GM12878 (cell line): ENCODE measurements at regions of chr17 and their contacts with region 1.

Region 1: DNA sequence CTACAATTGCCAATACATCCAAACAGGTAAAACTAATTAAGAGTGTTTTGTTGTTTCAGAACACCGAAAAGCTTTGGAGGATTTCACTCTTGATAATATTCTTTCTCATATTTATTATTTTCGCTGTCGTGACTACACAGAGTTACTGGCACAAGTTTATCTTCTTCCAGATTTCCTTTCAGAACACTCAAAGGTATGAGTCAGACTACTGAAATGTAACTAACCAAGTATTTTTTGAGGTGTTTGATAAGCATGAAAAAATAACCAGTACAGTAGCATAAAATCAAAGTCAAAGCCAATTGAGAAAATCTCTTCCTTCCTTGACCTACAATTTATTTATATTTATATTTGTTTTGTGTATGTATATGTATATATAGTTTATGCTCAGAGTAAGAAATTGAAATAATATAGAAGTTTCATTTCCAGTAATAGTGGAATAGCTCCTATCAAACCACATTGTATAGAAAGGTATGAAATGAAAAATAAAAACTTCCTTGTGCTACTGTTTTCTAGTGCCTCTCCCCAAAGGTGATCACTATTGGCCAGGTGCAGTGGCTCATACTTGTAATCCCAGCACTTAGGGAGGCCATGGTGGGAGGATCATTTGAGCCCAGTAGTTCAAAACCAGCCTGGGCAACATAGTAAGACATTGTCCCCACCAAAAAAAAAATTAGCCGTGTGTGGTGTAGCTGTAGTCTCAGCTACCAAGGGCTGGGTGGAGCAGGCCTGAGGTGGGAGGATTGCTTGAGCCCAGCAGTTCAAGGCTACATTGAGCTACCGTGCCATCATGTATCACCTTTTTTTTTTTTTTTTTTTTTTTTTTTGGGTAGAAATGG is 11.0 kb downstream of the RAD51C start:
- DNase-seq: no peak
- ATAC-seq: 0 out of 3 replicates have a peak, but pooled peaks have one; percentile 3
- H3K4me3 ChIP-seq: no peak overlapping the region
- H3K27ac ChIP-seq: peak overlapping the region; percentile 78; the same call in 1 of the 2 replicates
- H3K4me1 ChIP-seq: peaks cover 41% of the 10 kb centered on the region
- H3K27me3 ChIP-seq: no peaks in the 10 kb centered on the region
- CTCF ChIP-seq: no peak
- EP300 ChIP-seq: no peak
- POLR2A ChIP-seq: no peak
- RAD21 ChIP-seq: no peak

Region 2: DNA sequence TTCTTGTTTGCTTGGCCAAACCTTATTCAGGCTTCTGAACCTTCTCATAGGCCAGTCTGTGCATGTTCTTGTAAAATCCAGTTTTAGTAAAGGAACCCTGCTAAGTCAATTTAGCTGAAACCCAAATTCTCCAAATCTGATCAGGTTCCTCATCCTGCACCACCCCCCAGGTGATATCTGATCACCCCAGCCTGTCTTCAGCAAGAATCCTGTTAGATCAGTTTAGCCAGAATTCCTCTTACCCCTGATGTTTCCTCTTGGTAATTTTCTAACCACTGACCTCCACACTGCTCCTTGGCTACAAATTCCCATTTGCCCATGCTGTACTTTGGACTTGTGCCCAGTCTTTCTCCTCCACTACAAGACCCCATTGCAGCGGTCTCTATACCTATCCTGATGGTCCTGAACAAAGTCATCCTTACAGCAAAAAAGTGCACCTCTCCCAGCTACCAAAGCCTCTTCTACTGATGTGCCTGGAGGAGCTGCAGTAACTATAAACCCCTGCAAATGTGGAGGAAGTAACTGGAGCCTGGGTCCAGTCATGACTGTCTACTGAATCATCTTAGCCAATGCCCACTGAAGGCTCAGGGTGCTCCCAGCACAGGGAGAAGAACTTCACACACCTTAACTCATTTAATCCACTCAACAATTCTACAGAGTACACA is 35.3 kb before region 1 on chr17:
- CTCF ChIA-PET with region 1: interaction called, 5 read pairs
- POLR2A ChIA-PET with region 1: interaction called, 4 read pairs
- RAD21 ChIA-PET with region 1: no interaction called
- SMC1A ChIA-PET with region 1: interaction called, 5 read pairs
- in situ Hi-C with region 1: no loop called
- intact Hi-C with region 1: loop called (anchors 5 kb)
- DNase-seq: no peak
- ATAC-seq: no peak
- H3K4me3 ChIP-seq: no peak overlapping the region
- H3K27ac ChIP-seq: no peak overlapping the region
- H3K4me1 ChIP-seq: no peaks in the 10 kb centered on the region
- H3K27me3 ChIP-seq: no peaks in the 10 kb centered on the region
- CTCF ChIP-seq: no peak
- EP300 ChIP-seq: no peak
- POLR2A ChIP-seq: no peak
- RAD21 ChIP-seq: no peak

Region 3: DNA sequence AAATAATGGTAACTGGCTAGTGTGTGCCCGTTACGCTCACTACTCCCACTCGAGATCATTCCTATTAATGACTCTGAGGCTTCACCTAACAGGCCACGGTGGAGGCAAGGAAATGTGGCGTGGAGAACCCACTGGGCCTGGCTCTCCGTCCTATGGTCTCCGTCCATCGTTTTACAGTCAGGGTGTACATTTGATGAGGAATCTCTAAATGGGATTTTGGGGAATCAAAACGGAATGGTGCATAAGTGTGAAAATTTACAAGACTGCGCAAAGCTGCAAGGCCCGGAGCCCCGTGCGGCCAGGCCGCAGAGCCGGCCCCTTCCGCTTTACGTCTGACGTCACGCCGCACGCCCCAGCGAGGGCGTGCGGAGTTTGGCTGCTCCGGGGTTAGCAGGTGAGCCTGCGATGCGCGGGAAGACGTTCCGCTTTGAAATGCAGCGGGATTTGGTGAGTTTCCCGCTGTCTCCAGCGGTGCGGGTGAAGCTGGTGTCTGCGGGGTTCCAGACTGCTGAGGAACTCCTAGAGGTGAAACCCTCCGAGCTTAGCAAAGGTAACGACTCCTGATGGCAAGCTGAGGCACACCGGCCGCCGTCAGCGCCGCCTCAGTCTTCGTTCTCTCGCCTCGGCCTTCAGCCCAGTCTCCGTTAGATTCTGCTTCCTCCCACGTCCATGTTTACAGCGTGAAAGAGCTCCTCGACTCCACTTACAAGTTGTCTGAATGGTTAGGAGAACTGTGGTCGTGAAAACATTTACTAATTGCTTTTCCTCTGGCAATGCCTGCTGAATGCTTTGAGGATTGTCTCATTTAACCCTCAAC is 10.9 kb before region 1 on chr17 and contains the start of gene RAD51C:
- CTCF ChIA-PET with region 1: interaction called, 3 read pairs
- POLR2A ChIA-PET with region 1: interaction called, 24 read pairs
- RAD21 ChIA-PET with region 1: interaction called, 13 read pairs
- SMC1A ChIA-PET with region 1: interaction called, 9 read pairs
- in situ Hi-C with region 1: no loop called
- intact Hi-C with region 1: no loop called
- DNase-seq: peak; percentile 67
- ATAC-seq: peak; percentile 98
- H3K4me3 ChIP-seq: peak within 1 kb of the TSS; percentile 66
- H3K27ac ChIP-seq: peak within 1 kb of the TSS; percentile 96
- H3K4me1 ChIP-seq: no peaks in the 10 kb centered on the region; the same call in none of the 2 replicates
- H3K27me3 ChIP-seq: no peaks in the 10 kb centered on the region
- CTCF ChIP-seq: no peak
- EP300 ChIP-seq: no peak; a peak in 1 of 4 replicates
- POLR2A ChIP-seq: peak; percentile 87
- RAD21 ChIP-seq: no peak
- polyA plus RNA-seq, gene RAD51C: 229 to 240 TPM

Region 4: GRCh38 chr17:58764373-58764772 is 61.0 kb after region 1 on chr17:
- CTCF ChIA-PET with region 1: no interaction called
- POLR2A ChIA-PET with region 1: no interaction called
- RAD21 ChIA-PET with region 1: no interaction called
- SMC1A ChIA-PET with region 1: no interaction called
- in situ Hi-C with region 1: no loop called
- intact Hi-C with region 1: no loop called
- DNase-seq: no peak
- ATAC-seq: peak; percentile 26; the same call in 2 of the 3 replicates
- H3K4me3 ChIP-seq: no peak overlapping the region
- H3K27ac ChIP-seq: no peak overlapping the region
- H3K4me1 ChIP-seq: no peaks in the 10 kb centered on the region
- H3K27me3 ChIP-seq: no peaks in the 10 kb centered on the region; a peak in 1 of 4 replicates
- CTCF ChIP-seq: no peak
- EP300 ChIP-seq: no peak
- POLR2A ChIP-seq: no peak
- RAD21 ChIP-seq: no peak